Transverse colon (tissue), 4 donors: ENCODE measurements at regions of chr19 and their contacts with region 1.

Region 1: DNA sequence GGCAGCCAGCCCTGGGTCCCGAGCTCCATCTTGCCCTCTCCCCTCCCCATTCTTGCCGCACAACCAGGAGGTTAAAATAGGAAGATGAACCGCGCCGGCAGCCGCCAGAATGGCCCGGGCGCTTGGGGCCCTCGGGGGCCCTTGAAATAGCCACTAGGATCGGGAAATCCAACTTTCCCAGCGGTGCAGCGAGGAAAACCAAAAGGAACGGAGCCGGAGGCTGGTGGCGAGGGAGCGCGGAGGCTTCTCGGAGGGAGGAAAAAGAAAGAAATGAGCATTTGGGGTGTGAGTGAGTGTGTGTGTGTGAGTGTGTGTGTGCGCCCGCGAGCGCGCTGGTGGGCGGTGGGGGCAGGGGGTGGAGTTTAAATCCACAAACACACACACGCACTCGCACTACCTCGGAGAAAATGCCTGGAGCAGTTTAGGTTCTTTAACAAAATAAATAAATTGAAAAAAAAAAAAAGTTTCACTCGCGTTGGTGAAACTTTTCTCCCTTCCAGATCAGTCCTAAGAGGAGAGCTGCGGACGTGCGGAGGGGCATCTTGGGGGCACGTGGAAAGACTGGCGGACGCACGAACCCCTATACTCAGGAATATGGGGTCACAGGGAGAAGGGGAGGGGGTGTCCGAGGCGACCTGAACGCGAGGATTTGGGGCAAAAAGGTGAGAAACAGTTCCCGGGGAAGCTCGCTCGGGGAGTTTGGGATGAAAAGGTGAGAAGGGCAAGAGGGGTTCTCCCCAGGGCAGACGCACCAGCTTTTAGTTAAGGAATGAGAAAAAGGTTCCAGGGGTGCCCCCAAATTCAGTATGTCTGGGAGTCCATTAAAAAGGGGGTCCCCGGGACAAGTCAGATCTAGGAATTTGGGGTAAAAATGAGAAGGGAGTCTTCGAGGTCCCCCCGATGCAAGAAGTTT is 1.3 kb downstream of the RFX2 start:
- DNase-seq: peak; percentile 66
- H3K4me3 ChIP-seq: peak overlapping the region; percentile 75 to 89 (median 80)
- H3K27ac ChIP-seq: peak overlapping the region; percentile 84 to 91 (median 89)
- H3K4me1 ChIP-seq: peaks cover 4 to 47% (median 14%) of the 10 kb centered on the region in 4 donors
- H3K27me3 ChIP-seq: no peaks in the 10 kb centered on the region
- CTCF ChIP-seq: peak in 1 of 5 experiments; percentile 15
- EP300 ChIP-seq: no peak
- POLR2A ChIP-seq: peak; percentile 62

Region 2: DNA sequence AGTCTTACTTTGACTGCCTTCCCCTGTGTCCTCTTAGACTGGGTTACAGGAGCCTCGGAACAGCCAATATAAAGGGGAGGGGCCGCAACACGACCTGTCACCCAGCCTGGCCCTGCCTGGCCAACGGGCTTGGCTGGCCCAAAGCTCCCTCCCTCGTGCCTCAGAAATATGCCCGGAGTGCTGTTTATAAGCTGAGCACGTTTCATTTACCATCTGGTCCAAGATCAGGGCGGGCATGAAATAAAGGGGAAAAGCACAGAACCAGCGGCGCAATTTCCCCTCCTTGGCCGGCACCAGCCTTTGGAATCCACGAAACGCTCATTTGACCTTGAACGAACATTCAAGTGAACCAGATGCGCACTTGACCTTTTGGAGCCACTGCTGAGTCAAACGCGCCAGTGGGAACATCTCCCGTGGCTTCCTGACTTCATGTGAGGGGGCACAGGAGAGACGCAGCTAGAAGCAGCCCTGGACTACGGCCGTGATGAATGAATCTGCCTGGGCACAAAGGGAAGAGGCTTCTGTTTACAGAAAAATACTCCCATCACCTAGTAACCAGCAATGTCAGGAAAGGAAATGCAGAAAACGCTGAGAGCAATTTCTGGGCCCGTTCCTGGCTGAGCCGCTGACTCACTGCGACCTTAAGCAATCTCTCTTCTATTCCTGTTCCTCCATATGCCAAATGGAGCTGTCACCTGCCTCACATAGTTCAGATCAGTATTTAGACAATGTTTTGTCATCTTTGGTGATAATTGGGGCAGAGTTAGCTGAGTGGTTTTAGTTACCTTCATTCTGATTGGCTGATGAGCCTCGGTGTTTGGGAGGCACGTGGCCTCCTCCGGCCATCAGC is 52.0 kb before region 1 on chr19:
- in situ Hi-C with region 1: no loop called
- intact Hi-C with region 1: loop called (anchors 2 kb)
- DNase-seq: peak; percentile 70
- H3K4me3 ChIP-seq: peak overlapping the region in 1 of 4 donors; percentile 21
- H3K27ac ChIP-seq: peak overlapping the region; percentile 90 to 95 (median 92)
- H3K4me1 ChIP-seq: peaks cover 45 to 63% (median 53%) of the 10 kb centered on the region in 4 donors
- H3K27me3 ChIP-seq: no peaks in the 10 kb centered on the region
- CTCF ChIP-seq: no peak
- EP300 ChIP-seq: peak; percentile 73
- POLR2A ChIP-seq: peak; percentile 57